Posterior cingulate gyrus (tissue), 11 donors: ENCODE measurements at regions of chr16 and their contacts with region 1.

Region 1: GRCh38 chr16:71311553-71312158 is 22.5 kb upstream of the CMTR2 start:
- DNase-seq: peak in 3 of 10 donors; percentile 22 to 26 (median 24)

Region 2: DNA sequence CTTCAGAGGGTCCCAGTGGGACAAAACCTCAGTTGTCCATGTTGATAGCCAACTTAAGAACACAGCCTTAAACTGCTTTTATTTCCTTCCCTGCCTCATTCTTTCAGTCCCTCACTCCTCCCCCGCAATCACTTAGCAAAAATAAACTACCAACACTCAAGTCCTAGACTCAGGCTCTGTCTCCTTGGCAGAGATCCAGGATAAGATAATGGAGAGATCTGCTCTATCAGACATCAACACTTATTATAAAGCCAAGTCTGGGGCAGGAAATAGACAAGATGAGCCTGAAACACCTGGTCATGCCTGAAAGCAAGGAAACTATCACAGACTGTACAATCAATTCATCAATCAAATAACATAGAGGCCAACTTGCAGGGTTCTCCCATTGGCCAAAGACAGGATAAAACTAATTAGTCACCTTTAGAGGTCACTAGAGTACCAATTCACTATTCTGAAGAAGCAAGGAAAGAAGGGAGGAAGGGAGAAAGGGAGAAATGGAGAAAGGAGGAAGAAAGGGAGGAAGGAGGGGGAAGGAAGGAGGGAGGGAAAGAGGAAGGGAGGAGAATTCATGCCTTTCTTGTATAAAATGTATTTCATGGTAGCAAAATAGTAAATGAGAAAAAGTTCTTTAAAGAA is 96.8 kb before region 1 on chr16:
- intact Hi-C with region 1: loop called (anchors 5 kb)
- DNase-seq: no peak

Region 3: DNA sequence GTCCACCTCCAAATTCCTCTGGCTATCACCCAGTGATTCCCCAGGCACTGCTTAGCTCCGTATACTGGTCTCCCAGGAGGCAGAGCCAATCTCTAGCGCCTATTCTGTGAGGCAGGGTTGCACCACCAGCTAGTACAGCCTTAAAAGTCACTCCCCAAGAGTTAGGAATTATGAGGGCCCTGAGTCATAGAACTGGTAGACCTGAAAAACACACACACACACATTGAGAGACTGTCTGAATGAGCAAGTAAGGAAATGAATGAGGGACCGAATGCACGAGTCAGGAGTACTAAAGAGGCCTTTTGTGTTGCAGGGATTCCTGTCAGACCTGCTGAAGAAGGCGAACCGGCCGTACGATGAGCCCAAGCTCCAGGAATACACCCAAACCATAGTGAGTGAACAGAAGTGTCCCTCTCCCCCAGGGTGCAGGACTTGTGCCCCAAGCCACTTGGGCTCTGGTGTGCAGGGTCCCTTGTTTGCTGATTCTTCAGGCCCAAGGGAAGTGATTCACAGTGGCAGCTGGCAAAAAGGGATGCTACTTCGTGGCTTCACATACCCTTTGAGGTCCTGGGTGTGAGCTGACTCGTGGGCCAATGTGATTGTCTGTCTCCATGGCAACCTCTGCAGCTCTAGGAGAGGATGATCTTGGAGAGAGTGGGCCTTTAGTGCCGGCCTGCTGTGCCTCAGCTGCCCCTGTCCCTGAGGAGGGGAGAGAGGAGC is 71.6 kb after region 1 on chr16:
- intact Hi-C with region 1: no loop called
- DNase-seq: no peak

Region 4: GRCh38 chr16:71762186-71762585 is 450.5 kb after region 1 on chr16:
- intact Hi-C with region 1: no loop called
- DNase-seq: no peak